MCF 10A (cell line): ENCODE measurements at regions of chr5 and their contacts with region 1.

Region 1: GRCh38 chr5:139690064-139690802 is 42.1 kb downstream of the CXXC5 start:
- DNase-seq: peak; percentile 66
- H3K4me3 Mint-ChIP-seq: no peak overlapping the region
- H3K27ac Mint-ChIP-seq: no peak overlapping the region
- H3K4me1 Mint-ChIP-seq: peaks cover 6% of the 10 kb centered on the region
- H3K27me3 Mint-ChIP-seq: no peaks in the 10 kb centered on the region
- CTCF ChIP-seq: peak; percentile 84

Region 2: GRCh38 chr5:139574641-139575312 is 115.5 kb before region 1 on chr5:
- CTCF ChIA-PET with region 1: interaction called, 5 read pairs
- POLR2A ChIA-PET with region 1: no interaction called
- intact Hi-C with region 1: loop called (anchors 1 kb)
- DNase-seq: peak; percentile 70
- H3K4me3 Mint-ChIP-seq: no peak overlapping the region
- H3K27ac Mint-ChIP-seq: peak overlapping the region; percentile 71
- H3K4me1 Mint-ChIP-seq: peaks cover 42% of the 10 kb centered on the region
- H3K27me3 Mint-ChIP-seq: no peaks in the 10 kb centered on the region
- CTCF ChIP-seq: peak; percentile 75

Region 3: GRCh38 chr5:139670369-139671095 is 19.7 kb before region 1 on chr5:
- CTCF ChIA-PET with region 1: interaction called, 22 read pairs
- POLR2A ChIA-PET with region 1: interaction called, 8 read pairs
- intact Hi-C with region 1: no loop called
- DNase-seq: no peak
- H3K4me3 Mint-ChIP-seq: no peak overlapping the region
- H3K27ac Mint-ChIP-seq: peak overlapping the region; percentile 93
- H3K4me1 Mint-ChIP-seq: peaks cover 25% of the 10 kb centered on the region
- H3K27me3 Mint-ChIP-seq: no peaks in the 10 kb centered on the region
- CTCF ChIP-seq: peak; percentile 20

Region 4: DNA sequence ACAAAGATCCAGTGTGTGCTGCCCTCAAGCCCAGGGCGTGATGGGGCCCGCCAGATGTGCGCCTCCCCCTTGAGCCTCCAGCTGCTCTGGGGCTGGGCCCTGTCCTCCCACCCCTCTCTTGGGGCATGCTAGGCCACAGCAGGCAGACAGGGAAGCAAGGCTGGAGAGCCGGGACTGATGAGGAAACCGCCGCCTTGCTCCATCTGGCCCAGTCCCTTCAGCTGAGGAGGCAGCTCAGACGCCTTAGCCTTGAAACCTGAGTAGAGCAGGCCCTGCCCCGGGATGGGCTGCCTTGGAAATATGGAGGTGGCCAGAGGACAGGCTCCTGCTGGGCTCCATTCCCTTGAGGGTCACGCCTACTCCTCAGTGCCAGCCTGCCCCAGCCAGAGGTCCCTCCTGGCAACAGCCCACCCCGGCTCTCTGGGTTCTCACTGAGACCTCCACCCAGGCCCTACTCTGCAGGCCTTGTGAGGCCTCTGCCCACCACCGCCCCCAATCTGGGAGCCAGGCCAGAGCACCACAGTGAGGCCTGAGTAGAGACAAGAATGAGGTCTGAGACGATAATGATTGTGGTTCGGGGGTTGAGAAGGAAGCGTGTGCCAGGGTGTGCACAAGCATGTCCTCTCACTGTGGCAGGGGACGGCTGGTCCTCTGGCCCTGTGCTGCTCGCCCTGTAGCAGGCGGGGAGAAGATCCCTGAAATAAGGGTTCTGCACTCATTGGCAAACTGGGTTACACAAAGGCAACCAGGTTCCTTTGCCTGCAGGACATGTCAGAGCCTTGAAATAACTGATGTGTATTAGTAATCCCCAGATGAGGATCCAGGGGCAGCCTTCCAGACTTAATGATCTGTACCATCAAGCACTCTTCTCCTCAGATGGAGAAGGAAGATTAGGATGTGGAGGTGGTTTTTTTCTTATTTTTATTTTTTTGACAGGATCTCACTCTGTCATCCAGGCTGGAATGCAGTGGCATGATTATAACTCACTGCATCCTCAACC is 11.2 kb before region 1 on chr5:
- CTCF ChIA-PET with region 1: interaction called, 22 read pairs
- POLR2A ChIA-PET with region 1: no interaction called
- intact Hi-C with region 1: no loop called
- DNase-seq: no peak
- H3K4me3 Mint-ChIP-seq: no peak overlapping the region
- H3K27ac Mint-ChIP-seq: no peak overlapping the region
- H3K4me1 Mint-ChIP-seq: peaks cover 6% of the 10 kb centered on the region
- H3K27me3 Mint-ChIP-seq: no peaks in the 10 kb centered on the region
- CTCF ChIP-seq: no peak